ENCODE measurements at regions of chr6 and their contacts with region 1.

Region 1: GRCh38 chr6:152380993-152381898 is 255.9 kb downstream of the SYNE1 start:
- DNase-seq: peak; percentile 77
- ATAC-seq: peak; percentile 74
- H3K4me3 ChIP-seq: peak overlapping the region; percentile 72
- H3K27ac ChIP-seq: peak overlapping the region; percentile 93
- H3K4me1 ChIP-seq: peaks cover 31% of the 10 kb centered on the region
- H3K27me3 ChIP-seq: no peaks in the 10 kb centered on the region
- CTCF ChIP-seq: no peak

Region 2: GRCh38 chr6:152368761-152369624 is 12.3 kb before region 1 on chr6:
- CTCF ChIA-PET with region 1: no interaction called
- POLR2A ChIA-PET with region 1: interaction called, 16 read pairs
- intact Hi-C with region 1: no loop called
- DNase-seq: no peak
- ATAC-seq: no peak
- H3K4me3 ChIP-seq: no peak overlapping the region
- H3K27ac ChIP-seq: no peak overlapping the region
- H3K4me1 ChIP-seq: no peaks in the 10 kb centered on the region
- H3K27me3 ChIP-seq: no peaks in the 10 kb centered on the region
- CTCF ChIP-seq: no peak

Region 3: GRCh38 chr6:152401978-152402377 is 20.7 kb after region 1 on chr6:
- CTCF ChIA-PET with region 1: no interaction called
- POLR2A ChIA-PET with region 1: interaction called, 18 read pairs
- intact Hi-C with region 1: no loop called
- DNase-seq: peak; percentile 86
- ATAC-seq: peak; percentile 98
- H3K4me3 ChIP-seq: no peak overlapping the region
- H3K27ac ChIP-seq: peak overlapping the region; percentile 44
- H3K4me1 ChIP-seq: peaks cover 34% of the 10 kb centered on the region
- H3K27me3 ChIP-seq: no peaks in the 10 kb centered on the region
- CTCF ChIP-seq: no peak

Region 4: DNA sequence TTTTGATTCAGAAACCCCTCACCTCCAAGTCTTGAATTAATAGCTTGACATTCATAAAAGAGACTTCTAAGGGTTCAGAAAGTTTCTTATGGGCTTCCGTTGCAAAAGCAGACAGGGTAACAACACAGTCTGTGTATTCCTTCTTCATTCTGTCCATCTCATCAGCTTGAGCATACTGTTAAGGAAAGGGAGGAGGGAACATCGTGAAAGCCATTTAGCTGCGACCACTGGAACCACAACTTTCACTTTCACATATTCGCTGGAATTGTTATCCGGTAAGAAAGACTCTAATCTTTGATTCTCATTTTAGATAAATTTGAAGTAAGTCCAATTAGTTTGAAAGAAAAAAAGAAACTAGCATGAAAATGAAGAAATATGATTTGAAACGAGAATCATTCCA is 81.5 kb after region 1 on chr6:
- CTCF ChIA-PET with region 1: no interaction called
- POLR2A ChIA-PET with region 1: interaction called, 6 read pairs
- intact Hi-C with region 1: loop called (anchors 2 kb)
- DNase-seq: no peak
- ATAC-seq: no peak; the same call in 1 of the 2 replicates
- H3K4me3 ChIP-seq: peak overlapping the region; percentile 56
- H3K27ac ChIP-seq: no peak overlapping the region
- H3K4me1 ChIP-seq: peaks cover 5% of the 10 kb centered on the region
- H3K27me3 ChIP-seq: no peaks in the 10 kb centered on the region; the same call in 1 of the 2 replicates
- CTCF ChIP-seq: no peak

Region 5: DNA sequence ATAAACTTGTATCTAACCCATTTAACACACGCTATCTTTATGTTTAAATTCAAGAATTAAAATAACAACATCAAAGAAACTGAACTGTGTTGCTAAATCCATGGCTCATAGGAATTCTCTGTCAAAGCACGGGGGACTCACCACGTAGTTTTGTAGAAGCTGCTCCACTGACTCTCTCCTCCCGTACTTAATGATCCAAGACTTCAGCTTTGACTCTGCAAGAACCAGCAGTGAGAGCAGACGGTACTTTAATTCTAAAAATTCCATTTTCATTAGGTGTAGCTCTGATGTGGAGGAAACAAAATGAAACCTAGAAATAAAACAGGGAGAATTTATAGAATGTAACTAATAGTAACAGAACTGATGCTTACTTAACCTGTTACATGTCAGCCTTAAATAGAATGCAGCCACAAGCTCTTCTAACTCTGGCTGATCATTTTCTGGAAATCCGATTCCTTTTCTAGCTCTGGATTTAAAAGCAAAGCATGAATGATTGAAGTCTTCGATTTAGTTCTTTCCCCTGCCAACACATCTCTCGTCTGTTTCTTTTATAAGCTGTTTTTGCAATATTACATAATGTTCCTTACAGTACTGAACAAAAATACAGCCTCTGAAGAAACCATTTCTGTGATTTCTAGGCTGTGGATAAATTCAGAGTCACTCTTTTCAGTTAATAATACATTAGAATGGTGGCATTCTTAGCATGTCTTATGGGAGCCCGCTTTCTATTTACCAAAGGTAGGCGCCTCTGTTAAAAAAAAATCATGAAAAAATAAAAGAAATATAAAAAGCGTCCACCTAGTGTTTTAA is 90.4 kb after region 1 on chr6:
- CTCF ChIA-PET with region 1: no interaction called
- POLR2A ChIA-PET with region 1: no interaction called
- intact Hi-C with region 1: loop called (anchors 2 kb)
- DNase-seq: no peak
- ATAC-seq: peak; percentile 74
- H3K4me3 ChIP-seq: peak overlapping the region; percentile 59
- H3K27ac ChIP-seq: no peak overlapping the region
- H3K4me1 ChIP-seq: no peaks in the 10 kb centered on the region
- H3K27me3 ChIP-seq: peaks cover 8% of the 10 kb centered on the region; the same call in 1 of the 2 replicates
- CTCF ChIP-seq: no peak